MCF 10A (cell line): ENCODE measurements at regions of chr4 and their contacts with region 1.

Region 1: DNA sequence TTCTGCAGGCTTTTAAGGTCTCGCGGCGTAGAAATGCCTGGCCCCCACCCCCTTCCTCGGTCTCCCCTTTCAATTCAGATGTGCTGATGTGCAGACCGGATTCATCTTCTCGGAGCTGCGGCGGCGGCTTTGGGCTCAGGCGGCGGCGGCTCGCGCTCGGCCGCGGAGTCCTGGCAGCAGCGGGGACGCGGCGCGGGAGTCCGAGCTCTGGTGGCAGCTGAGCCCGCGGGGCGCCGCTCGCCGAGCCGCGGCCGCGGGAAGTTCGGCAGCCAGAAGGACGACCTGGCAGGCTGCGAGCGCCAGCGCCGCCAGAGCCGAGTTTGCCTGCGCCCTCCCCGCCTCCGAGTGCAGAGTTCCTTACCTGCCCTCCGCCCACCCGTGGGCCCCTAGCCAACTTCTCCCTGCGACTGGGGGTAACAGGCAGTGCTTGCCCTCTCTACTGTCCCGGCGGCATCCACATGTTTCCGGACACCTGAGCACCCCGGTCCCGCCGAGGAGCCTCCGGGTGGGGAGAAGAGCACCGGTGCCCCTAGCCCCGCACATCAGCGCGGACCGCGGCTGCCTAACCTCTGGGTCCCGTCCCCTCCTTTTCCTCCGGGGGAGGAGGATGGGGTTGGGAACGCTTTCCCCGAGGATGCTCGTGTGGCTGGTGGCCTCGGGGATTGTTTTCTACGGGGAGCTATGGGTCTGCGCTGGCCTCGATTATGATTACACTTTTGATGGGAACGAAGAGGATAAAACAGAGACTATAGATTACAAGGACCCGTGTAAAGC is 448 bp downstream of the TLL1 start:
- DNase-seq: peak; percentile 45
- H3K4me3 Mint-ChIP-seq: peak overlapping the region; percentile 84
- H3K27ac Mint-ChIP-seq: peak overlapping the region; percentile 59
- H3K4me1 Mint-ChIP-seq: peaks cover 25% of the 10 kb centered on the region
- H3K27me3 Mint-ChIP-seq: no peaks in the 10 kb centered on the region
- CTCF ChIP-seq: no peak

Region 2: DNA sequence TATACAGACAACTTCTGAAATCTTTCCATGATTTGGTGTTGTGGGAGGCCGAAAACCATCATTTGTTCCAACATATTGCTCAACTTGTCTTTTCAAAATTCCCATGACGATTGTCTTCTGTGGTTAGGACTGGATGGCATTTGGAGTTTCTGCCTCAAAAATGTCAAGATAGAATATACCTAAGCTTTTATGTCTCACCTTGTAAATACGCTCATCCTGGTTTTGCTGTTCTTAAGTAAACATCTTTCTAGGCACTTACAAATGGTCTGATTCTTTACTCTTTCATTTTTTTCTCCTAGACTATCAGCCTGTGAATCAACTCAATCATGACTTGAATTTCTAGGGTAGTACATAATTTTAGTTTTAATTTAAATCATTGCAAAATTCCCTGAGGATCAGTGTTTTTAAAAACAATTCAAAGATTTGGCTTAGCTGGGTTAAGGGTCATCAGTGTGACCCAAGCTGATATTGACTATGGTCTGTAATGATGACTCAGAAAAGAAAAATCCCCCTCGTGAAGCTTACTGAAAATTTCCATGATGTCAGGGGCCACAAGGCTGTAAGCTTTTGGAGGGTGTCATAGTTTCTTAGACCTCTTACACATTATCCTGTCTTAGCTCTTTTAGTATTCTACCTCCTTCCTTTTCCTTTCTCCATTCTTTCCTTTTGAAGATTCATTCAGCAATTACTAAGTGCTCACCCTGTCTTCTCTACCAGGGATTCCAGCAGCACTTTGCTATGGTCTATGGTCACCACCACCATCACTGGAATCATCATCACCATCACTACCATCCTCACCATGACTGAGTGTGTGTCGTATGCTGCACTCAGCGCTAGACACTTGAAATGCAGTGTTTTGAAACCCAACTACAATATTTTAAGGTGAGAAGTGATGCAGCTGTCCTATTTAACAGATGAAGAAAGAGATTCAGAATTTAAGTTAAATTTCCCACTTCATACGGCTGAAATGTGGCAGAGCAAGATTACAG is 370.3 kb before region 1 on chr4:
- CTCF ChIA-PET with region 1: no interaction called
- POLR2A ChIA-PET with region 1: interaction called, 11 read pairs
- intact Hi-C with region 1: no loop called
- DNase-seq: peak; percentile 44
- H3K4me3 Mint-ChIP-seq: peak overlapping the region; percentile 2
- H3K27ac Mint-ChIP-seq: peak overlapping the region; percentile 71
- H3K4me1 Mint-ChIP-seq: peaks cover 37% of the 10 kb centered on the region
- H3K27me3 Mint-ChIP-seq: no peaks in the 10 kb centered on the region
- CTCF ChIP-seq: no peak

Region 3: GRCh38 chr4:165738571-165738970 is 134.9 kb before region 1 on chr4:
- CTCF ChIA-PET with region 1: interaction called, 3 read pairs
- POLR2A ChIA-PET with region 1: interaction called, 6 read pairs
- intact Hi-C with region 1: loop called (anchors 2 kb)
- DNase-seq: peak; percentile 60
- H3K4me3 Mint-ChIP-seq: peak overlapping the region; percentile 66
- H3K27ac Mint-ChIP-seq: peak overlapping the region; percentile 93
- H3K4me1 Mint-ChIP-seq: peaks cover 20% of the 10 kb centered on the region
- H3K27me3 Mint-ChIP-seq: no peaks in the 10 kb centered on the region
- CTCF ChIP-seq: no peak

Region 4: GRCh38 chr4:165767671-165768070 is 105.8 kb before region 1 on chr4:
- CTCF ChIA-PET with region 1: no interaction called
- POLR2A ChIA-PET with region 1: no interaction called
- intact Hi-C with region 1: no loop called
- DNase-seq: no peak
- H3K4me3 Mint-ChIP-seq: no peak overlapping the region
- H3K27ac Mint-ChIP-seq: no peak overlapping the region
- H3K4me1 Mint-ChIP-seq: peaks cover 9% of the 10 kb centered on the region
- H3K27me3 Mint-ChIP-seq: no peaks in the 10 kb centered on the region
- CTCF ChIP-seq: no peak

Region 5: GRCh38 chr4:166012129-166013078 is 138.9 kb after region 1 on chr4:
- CTCF ChIA-PET with region 1: no interaction called
- POLR2A ChIA-PET with region 1: interaction called, 4 read pairs
- intact Hi-C with region 1: loop called (anchors 5 kb)
- DNase-seq: no peak
- H3K4me3 Mint-ChIP-seq: no peak overlapping the region
- H3K27ac Mint-ChIP-seq: peak overlapping the region; percentile 78
- H3K4me1 Mint-ChIP-seq: peaks cover 23% of the 10 kb centered on the region
- H3K27me3 Mint-ChIP-seq: no peaks in the 10 kb centered on the region
- CTCF ChIP-seq: no peak